G401 (cell line): ENCODE measurements at regions of chr19 and their contacts with region 1.

Region 1: GRCh38 chr19:14081325-14082093 is 4.1 kb downstream of the C19orf67 start:
- DNase-seq: peak; percentile 99

Region 2: GRCh38 chr19:13366529-13367143 is 714.9 kb before region 1 on chr19:
- in situ Hi-C with region 1: loop called (anchors 25 kb)
- DNase-seq: peak; percentile 53

Region 3: GRCh38 chr19:13905938-13906904 is 175.3 kb before region 1 on chr19 and contains the starts of genes BRME1 and CC2D1A:
- in situ Hi-C with region 1: loop called (anchors 25 kb)
- DNase-seq: peak; percentile 90
- total RNA-seq, gene BRME1: 2.9 and 6.6 TPM in 2 replicates
- total RNA-seq, gene CC2D1A: 11.9 and 17.5 TPM in 2 replicates

Region 4: DNA sequence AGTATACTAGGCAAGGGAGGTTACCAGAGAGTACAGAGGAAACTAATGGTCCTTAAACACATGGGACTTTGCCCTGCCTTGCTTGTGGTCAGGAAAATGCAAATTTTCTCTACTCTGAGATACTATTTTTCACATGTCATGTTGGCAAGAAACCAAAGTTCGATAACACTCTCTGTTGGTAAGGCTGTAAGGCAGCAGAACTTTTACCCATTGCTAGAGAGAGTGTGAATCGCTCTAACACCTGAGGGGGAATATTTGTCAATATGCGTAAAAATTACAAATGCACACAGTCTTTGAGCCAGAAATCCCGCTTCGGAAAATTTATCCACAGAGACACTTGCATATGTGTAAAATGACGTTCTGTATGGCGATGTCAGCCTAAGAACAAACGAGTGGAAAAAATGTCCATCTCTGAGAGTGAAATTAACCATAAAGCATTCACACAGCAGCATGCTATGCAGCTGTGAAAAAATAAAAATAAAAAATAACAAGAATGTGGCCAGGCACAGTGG is 65.9 kb before region 1 on chr19:
- in situ Hi-C with region 1: no loop called
- DNase-seq: no peak